ENCODE measurements at regions of chr12 and their contacts with region 1.

Region 1: GRCh38 chr12:118103604-118104382 is at the start of gene VSIG10:
- DNase-seq: peak; percentile 91
- H3K4me3 ChIP-seq: peak within 1 kb of the TSS; percentile 69 to 97 (median 76)
- H3K27ac ChIP-seq: peak within 1 kb of the TSS; percentile 78 to 85 (median 80)
- H3K4me1 ChIP-seq: peaks cover 3 to 17% (median 8%) of the 10 kb centered on the region in 4 donors
- H3K27me3 ChIP-seq: no peaks in the 10 kb centered on the region
- CTCF ChIP-seq: no peak
- EP300 ChIP-seq: no peak
- POLR2A ChIP-seq: peak in 1 of 2 donors; percentile 61
- total RNA-seq, gene VSIG10: 22.2 to 31.1 (median 23.5) TPM

Region 2: DNA sequence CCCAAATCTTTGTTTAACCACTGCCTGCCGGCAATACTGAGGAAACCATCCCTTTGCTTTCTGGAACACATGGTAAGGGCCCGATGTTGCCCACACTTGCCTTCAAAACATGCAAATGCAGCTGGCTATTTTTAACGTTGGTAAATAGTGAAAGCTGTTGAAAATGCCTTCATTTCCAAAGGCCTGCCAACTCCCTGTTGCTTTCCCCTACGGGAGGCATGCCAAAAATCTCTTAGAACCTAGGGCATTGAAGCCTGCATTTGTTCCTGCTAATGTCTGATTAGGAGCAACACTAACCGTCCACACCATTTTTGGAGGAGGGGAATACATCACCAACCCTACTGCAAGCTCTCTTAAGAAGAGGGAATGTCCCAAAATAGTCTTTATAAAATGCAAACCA is 589.8 kb before region 1 on chr12:
- intact Hi-C with region 1: no loop called
- DNase-seq: no peak
- H3K4me3 ChIP-seq: no peak overlapping the region
- H3K27ac ChIP-seq: no peak overlapping the region
- H3K4me1 ChIP-seq: no peaks in the 10 kb centered on the region
- H3K27me3 ChIP-seq: no peaks in the 10 kb centered on the region
- CTCF ChIP-seq: no peak
- EP300 ChIP-seq: no peak
- POLR2A ChIP-seq: no peak

Region 3: GRCh38 chr12:117699575-117699974 is 404.2 kb before region 1 on chr12:
- intact Hi-C with region 1: no loop called
- DNase-seq: no peak
- H3K4me3 ChIP-seq: no peak overlapping the region
- H3K27ac ChIP-seq: no peak overlapping the region
- H3K4me1 ChIP-seq: no peaks in the 10 kb centered on the region
- H3K27me3 ChIP-seq: no peaks in the 10 kb centered on the region
- CTCF ChIP-seq: no peak
- EP300 ChIP-seq: no peak
- POLR2A ChIP-seq: no peak

Region 4: DNA sequence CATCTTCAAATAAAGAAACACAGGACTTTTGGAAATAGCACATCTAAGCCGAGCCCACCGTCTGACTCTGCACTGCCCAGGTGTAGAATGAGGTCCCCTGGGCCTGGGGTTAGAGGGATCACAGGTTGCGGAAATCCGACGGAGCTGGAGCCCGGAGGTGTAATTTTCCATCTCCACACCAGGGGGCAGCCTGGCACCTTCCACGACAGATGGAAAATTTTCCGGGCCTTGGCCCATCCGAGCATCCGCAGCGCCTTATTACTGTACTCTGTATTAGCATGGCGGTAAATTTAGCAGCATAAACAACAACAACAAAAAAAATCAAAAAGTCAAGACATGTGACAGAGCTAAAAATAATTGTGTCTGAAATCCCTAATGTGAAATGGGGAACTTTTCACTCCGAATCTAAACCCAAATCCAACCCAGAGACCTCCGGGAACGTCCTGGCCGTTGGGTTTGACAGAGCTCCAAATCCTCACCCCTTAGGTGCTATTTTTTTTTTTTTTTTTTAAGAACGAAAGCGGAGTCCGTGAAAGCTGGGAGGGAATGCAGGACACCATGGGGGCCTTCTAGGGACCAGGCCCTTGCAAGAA is 228.9 kb before region 1 on chr12:
- intact Hi-C with region 1: loop called (anchors 5 kb)
- DNase-seq: peak; percentile 76
- H3K4me3 ChIP-seq: no peak overlapping the region
- H3K27ac ChIP-seq: no peak overlapping the region
- H3K4me1 ChIP-seq: no peaks in the 10 kb centered on the region
- H3K27me3 ChIP-seq: peaks cover 0 to 32% (median 26%) of the 10 kb centered on the region in 3 donors
- CTCF ChIP-seq: peak; percentile 50 to 85 (median 81)
- EP300 ChIP-seq: no peak
- POLR2A ChIP-seq: no peak

Region 5: DNA sequence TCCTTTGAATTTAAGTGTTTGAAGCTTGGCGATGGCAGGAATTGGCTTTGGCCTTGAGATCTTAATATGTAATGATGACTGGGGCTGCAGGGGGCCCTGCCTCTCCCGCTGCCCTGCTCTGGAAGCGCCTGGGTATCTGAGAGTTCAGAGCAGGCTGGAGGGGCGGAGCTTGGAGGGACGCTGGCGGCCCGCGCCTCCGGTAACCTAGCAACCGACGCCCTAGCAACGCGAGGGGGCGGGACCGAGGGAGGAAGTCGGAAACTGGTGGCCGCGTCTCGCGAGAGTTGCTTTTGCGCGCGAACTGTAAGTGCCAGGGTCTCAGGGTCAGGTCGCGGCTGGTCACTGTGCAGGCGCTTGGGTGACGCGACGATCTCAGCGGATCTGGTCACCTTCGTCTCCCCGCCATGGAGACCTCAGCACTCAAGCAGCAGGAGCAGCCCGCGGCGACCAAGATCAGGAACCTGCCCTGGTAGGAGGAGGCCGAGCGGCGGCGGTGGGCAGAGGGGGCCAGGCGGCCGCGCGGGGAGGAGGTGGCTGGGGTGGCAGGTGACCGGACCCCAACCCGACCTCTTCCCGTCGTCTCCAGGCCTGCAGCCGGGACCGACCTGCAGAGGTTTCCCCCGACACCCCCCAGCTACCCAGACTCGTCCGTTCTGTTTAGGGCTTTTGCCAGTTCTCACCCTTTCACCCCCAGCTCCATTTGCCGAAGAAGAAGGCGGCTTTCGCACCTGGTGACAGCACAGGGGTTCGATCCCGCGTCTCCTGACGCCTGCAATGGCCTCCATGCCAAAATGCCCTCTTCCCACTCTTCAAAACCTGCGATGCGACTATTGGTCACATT is 87.1 kb before region 1 on chr12 and contains the start of gene RFC5:
- intact Hi-C with region 1: loop called (anchors 1 kb)
- DNase-seq: peak; percentile 98
- H3K4me3 ChIP-seq: peak within 1 kb of the TSS; percentile 85 to 95 (median 90)
- H3K27ac ChIP-seq: peak within 1 kb of the TSS; percentile 44 to 72 (median 60)
- H3K4me1 ChIP-seq: peaks cover 0 to 17% (median 14%) of the 10 kb centered on the region in 4 donors
- H3K27me3 ChIP-seq: no peaks in the 10 kb centered on the region
- CTCF ChIP-seq: no peak
- EP300 ChIP-seq: no peak
- POLR2A ChIP-seq: no peak
- total RNA-seq, gene RFC5: 6.9 to 12.7 (median 9.7) TPM

Region 6: DNA sequence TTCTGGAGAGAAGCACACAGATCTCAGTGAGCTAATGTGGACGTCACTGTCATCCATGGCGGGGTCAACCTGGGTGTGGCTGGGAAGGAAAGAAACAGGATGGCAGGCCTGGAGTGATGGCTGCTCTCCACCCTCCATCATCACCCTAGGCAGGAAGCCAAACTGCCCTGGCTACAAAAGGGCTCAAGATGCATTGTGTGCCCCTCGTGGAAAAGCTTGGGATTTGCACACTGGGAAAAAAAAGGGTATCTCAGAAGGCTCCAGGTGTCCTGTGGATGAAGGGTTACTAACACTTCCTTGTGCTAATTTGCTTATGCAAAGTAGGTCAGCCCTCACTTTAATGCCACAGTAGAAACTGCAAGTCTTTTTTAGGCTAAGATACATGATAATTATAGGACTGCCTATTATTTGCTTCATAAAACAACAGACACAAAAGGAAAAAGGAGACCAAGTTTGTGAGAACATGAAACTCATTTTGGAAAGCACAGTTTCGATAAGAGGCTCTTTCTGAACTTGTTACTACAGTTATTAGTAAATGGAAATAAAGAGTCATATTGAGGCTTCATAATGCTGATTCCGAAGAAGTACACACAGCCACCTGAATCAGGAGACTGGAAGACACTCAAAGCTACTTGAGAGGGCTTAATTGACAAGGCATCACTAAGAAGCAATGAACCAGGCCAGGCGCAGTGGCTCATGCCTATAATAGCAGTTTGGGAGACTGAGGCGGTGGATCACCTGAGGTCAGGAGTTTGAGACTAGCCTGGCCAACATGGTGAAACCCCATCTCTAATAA is 68.3 kb before region 1 on chr12:
- intact Hi-C with region 1: no loop called
- DNase-seq: no peak
- H3K4me3 ChIP-seq: no peak overlapping the region
- H3K27ac ChIP-seq: no peak overlapping the region
- H3K4me1 ChIP-seq: no peaks in the 10 kb centered on the region
- H3K27me3 ChIP-seq: no peaks in the 10 kb centered on the region
- CTCF ChIP-seq: no peak
- EP300 ChIP-seq: no peak
- POLR2A ChIP-seq: no peak

Region 7: DNA sequence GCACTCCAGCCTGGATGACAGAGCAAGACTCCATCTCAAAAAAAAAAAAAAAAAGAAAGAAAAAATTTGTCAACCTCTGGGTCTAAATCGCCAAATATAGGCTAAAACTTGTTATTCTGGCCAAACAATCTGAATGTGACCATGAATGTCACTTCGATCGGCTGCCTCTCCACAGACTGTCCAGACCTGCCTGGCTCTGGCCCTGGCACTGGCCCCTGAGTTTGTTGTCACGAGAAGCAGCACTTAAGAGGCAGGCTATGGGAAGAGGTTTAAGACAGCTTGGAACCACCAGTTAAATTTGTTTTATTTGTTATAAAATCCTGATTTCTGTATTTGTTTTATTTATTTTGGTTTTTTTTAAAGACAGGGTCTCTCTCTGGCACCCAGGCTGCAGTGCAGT is 57.4 kb before region 1 on chr12:
- intact Hi-C with region 1: no loop called
- DNase-seq: no peak
- H3K4me3 ChIP-seq: no peak overlapping the region
- H3K27ac ChIP-seq: no peak overlapping the region
- H3K4me1 ChIP-seq: peaks cover 0 to under 1% (median 0%) of the 10 kb centered on the region in 4 donors
- H3K27me3 ChIP-seq: no peaks in the 10 kb centered on the region
- CTCF ChIP-seq: no peak
- EP300 ChIP-seq: no peak
- POLR2A ChIP-seq: no peak